B cell (primary cell): ENCODE measurements at regions of chr1 and their contacts with region 1.

Region 1: GRCh38 chr1:65075123-65075976 is 72.7 kb upstream of the AK4 start:
- DNase-seq: peak; percentile 80
- ATAC-seq: peak; percentile 92
- H3K4me3 ChIP-seq: no peak overlapping the region
- H3K4me3 Mint-ChIP-seq: no peak overlapping the region
- H3K27ac ChIP-seq: no peak overlapping the region
- H3K27ac Mint-ChIP-seq: no peak overlapping the region
- H3K4me1 ChIP-seq: no peaks in the 10 kb centered on the region
- H3K4me1 Mint-ChIP-seq: no peaks in the 10 kb centered on the region
- H3K27me3 ChIP-seq: peaks cover 0 to 2% (median 0%) of the 10 kb centered on the region in 4 experiments
- H3K27me3 Mint-ChIP-seq: peaks cover 19% of the 10 kb centered on the region
- CTCF ChIP-seq: peak; percentile 80

Region 2: GRCh38 chr1:64686828-64687724 is 388.3 kb before region 1 on chr1:
- CTCF ChIA-PET with region 1: no interaction called
- POLR2A ChIA-PET with region 1: no interaction called
- intact Hi-C with region 1: loop called (anchors 1 kb)
- DNase-seq: peak; percentile 55
- ATAC-seq: peak; percentile 69
- H3K4me3 ChIP-seq: no peak overlapping the region
- H3K4me3 Mint-ChIP-seq: no peak overlapping the region
- H3K27ac ChIP-seq: no peak overlapping the region
- H3K27ac Mint-ChIP-seq: no peak overlapping the region
- H3K4me1 ChIP-seq: no peaks in the 10 kb centered on the region
- H3K4me1 Mint-ChIP-seq: no peaks in the 10 kb centered on the region
- H3K27me3 ChIP-seq: no peaks in the 10 kb centered on the region
- H3K27me3 Mint-ChIP-seq: peaks cover 11% of the 10 kb centered on the region
- CTCF ChIP-seq: peak; percentile 89

Region 3: DNA sequence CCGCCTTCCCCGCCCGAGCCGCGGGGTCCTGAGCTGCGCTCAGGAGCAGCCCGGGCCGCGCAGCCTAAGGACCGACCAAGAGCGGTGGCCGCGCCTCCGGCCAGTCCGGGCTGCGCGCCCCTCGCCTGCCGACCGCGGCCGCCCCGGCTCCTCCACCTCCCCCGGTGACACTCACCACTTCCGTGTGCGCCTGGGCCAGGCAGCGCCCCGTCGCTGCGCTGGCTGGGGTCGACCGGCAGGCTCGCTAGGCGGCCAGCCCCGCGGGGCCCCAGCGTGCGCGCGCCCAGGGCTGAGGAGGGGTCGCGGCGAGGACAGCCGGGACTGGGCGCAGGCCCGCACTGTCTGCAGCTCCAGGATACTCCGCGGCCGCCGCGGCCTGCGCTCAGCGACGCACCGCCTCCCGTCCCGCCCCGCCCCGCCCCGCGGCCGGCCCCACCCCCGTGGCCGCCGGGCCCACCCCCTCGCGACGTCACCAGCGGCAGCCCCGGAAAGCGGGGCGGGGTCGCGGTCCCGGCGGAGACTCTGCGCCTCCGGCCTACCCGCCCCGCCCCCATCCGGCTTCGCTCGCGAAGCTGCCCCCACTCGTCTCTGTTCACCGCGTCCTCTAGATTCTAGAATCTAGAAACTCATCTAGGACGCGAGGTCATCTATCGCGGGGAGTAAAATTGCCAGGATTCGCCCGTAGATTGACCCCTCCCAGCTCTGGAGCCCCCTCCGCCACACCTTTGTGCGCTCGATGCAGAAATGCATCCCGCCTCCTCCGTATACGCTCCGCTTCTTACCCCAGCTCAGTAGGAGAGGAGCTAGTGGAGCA is 109.0 kb before region 1 on chr1 and contains the start of gene JAK1:
- CTCF ChIA-PET with region 1: interaction called, 15 read pairs
- POLR2A ChIA-PET with region 1: no interaction called
- intact Hi-C with region 1: no loop called
- DNase-seq: peak; percentile 92
- ATAC-seq: peak; percentile 83
- H3K4me3 ChIP-seq: peak within 1 kb of the TSS; percentile 73 to 100 (median 91)
- H3K4me3 Mint-ChIP-seq: peak within 1 kb of the TSS; percentile 93
- H3K27ac ChIP-seq: peak within 1 kb of the TSS; percentile 79 to 96
- H3K27ac Mint-ChIP-seq: peak within 1 kb of the TSS; percentile 96
- H3K4me1 ChIP-seq: peaks cover 44 to 49% of the 10 kb centered on the region in 2 donors
- H3K4me1 Mint-ChIP-seq: peaks cover 43% of the 10 kb centered on the region
- H3K27me3 ChIP-seq: no peaks in the 10 kb centered on the region
- H3K27me3 Mint-ChIP-seq: no peaks in the 10 kb centered on the region
- CTCF ChIP-seq: no peak
- total RNA-seq, gene JAK1: 244 and 260 TPM in 2 replicates

Region 4: GRCh38 chr1:65036545-65037180 is 38.7 kb before region 1 on chr1:
- CTCF ChIA-PET with region 1: interaction called, 10 read pairs
- POLR2A ChIA-PET with region 1: no interaction called
- intact Hi-C with region 1: no loop called
- DNase-seq: no peak
- ATAC-seq: no peak
- H3K4me3 ChIP-seq: no peak overlapping the region
- H3K4me3 Mint-ChIP-seq: no peak overlapping the region
- H3K27ac ChIP-seq: no peak overlapping the region
- H3K27ac Mint-ChIP-seq: no peak overlapping the region
- H3K4me1 ChIP-seq: peaks cover 11 to 12% of the 10 kb centered on the region in 2 donors
- H3K4me1 Mint-ChIP-seq: peaks cover 14% of the 10 kb centered on the region
- H3K27me3 ChIP-seq: no peaks in the 10 kb centered on the region
- H3K27me3 Mint-ChIP-seq: no peaks in the 10 kb centered on the region
- CTCF ChIP-seq: no peak

Region 5: GRCh38 chr1:65059930-65060538 is 15.3 kb before region 1 on chr1:
- CTCF ChIA-PET with region 1: interaction called, 232 read pairs
- POLR2A ChIA-PET with region 1: no interaction called
- intact Hi-C with region 1: loop called (anchors 1 kb)
- DNase-seq: peak; percentile 51
- ATAC-seq: no peak
- H3K4me3 ChIP-seq: no peak overlapping the region
- H3K4me3 Mint-ChIP-seq: no peak overlapping the region
- H3K27ac ChIP-seq: no peak overlapping the region
- H3K27ac Mint-ChIP-seq: no peak overlapping the region
- H3K4me1 ChIP-seq: peaks cover 0 to 4% of the 10 kb centered on the region in 2 donors
- H3K4me1 Mint-ChIP-seq: peaks cover 40% of the 10 kb centered on the region
- H3K27me3 ChIP-seq: no peaks in the 10 kb centered on the region
- H3K27me3 Mint-ChIP-seq: no peaks in the 10 kb centered on the region
- CTCF ChIP-seq: peak; percentile 79

Region 6: DNA sequence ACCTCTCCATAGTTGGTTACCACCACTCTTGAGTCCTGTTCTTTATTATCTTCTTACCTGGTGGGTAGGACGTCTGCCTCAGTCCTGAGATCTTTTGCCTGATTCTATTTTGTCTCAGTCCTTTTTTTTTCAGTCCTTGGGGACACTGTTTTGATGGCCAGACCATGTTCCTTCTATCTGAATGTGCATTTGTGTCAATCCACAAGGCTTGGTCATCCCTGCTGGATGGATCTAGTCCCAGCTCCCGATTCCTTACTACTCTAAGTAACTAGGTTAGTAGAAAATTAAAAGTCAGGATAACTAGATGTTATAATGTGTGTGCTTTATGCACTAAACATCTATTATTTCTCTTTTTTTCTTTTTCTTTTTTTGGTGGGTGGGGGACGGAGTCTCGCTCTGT is 44.6 kb after region 1 on chr1:
- CTCF ChIA-PET with region 1: no interaction called
- POLR2A ChIA-PET with region 1: no interaction called
- intact Hi-C with region 1: no loop called
- DNase-seq: no peak
- ATAC-seq: no peak
- H3K4me3 ChIP-seq: no peak overlapping the region
- H3K4me3 Mint-ChIP-seq: no peak overlapping the region
- H3K27ac ChIP-seq: no peak overlapping the region
- H3K27ac Mint-ChIP-seq: no peak overlapping the region
- H3K4me1 ChIP-seq: no peaks in the 10 kb centered on the region
- H3K4me1 Mint-ChIP-seq: no peaks in the 10 kb centered on the region
- H3K27me3 ChIP-seq: no peaks in the 10 kb centered on the region
- H3K27me3 Mint-ChIP-seq: peaks cover 10% of the 10 kb centered on the region
- CTCF ChIP-seq: no peak